Activated CD4-positive, alpha-beta memory T cell treated with anti-CD3 and anti-CD28 coated beads for 36 hours (primary cell): ENCODE measurements at regions of chr6 and their contacts with region 1.

Region 1: GRCh38 chr6:129370268-129370916 is 339.6 kb downstream of the ARHGAP18 start:
- DNase-seq: peak; percentile 56
- H3K4me3 Mint-ChIP-seq: no peak overlapping the region
- H3K27ac Mint-ChIP-seq: no peak overlapping the region
- H3K4me1 Mint-ChIP-seq: peaks cover 19% of the 10 kb centered on the region
- H3K27me3 Mint-ChIP-seq: no peaks in the 10 kb centered on the region

Region 2: GRCh38 chr6:128807577-128807976 is 562.8 kb before region 1 on chr6:
- CTCF ChIA-PET with region 1: interaction called, 8 read pairs
- POLR2A ChIA-PET with region 1: no interaction called
- intact Hi-C with region 1: loop called (anchors 2 kb)
- DNase-seq: no peak
- H3K4me3 Mint-ChIP-seq: no peak overlapping the region
- H3K27ac Mint-ChIP-seq: no peak overlapping the region
- H3K4me1 Mint-ChIP-seq: no peaks in the 10 kb centered on the region
- H3K27me3 Mint-ChIP-seq: no peaks in the 10 kb centered on the region

Region 3: GRCh38 chr6:129239825-129240491 is 130.4 kb before region 1 on chr6:
- CTCF ChIA-PET with region 1: no interaction called
- POLR2A ChIA-PET with region 1: no interaction called
- intact Hi-C with region 1: no loop called
- DNase-seq: no peak
- H3K4me3 Mint-ChIP-seq: no peak overlapping the region
- H3K27ac Mint-ChIP-seq: no peak overlapping the region
- H3K4me1 Mint-ChIP-seq: no peaks in the 10 kb centered on the region
- H3K27me3 Mint-ChIP-seq: peaks cover 6% of the 10 kb centered on the region

Region 4: DNA sequence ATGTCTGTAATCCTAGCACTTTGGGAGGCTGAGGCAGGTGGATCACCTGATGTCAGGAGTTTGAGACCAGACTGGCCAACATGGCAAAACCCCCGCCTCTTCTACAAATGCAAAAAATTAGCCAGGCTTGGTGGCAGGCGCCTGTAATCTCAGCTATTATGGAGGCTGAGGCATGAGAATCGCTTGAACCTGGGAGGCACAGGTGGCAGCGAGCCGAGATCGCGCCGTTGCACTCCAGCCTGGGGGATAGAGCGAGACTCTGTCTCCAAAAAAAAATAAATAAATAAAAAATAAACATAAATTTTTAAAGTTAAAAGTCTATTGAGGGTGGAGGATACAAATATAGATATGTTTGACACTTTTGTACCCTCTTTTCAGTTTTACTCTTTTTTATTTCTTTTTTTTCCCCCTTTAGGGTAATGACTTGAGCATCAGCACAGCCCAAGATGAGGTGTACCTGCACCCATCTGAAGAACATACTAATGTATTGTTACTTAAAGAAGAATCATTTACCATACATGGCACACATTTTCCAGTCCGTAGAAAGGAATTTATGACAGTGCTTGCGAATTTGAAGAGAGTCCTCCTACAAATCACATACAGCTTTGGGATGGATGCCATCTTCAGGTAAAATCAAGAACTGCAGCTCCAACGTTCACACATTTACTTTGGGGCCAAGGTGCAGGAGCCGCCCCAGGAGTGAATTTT is 118.6 kb before region 1 on chr6:
- CTCF ChIA-PET with region 1: interaction called, 8 read pairs
- POLR2A ChIA-PET with region 1: no interaction called
- intact Hi-C with region 1: loop called (anchors 5 kb)
- DNase-seq: peak; percentile 61
- H3K4me3 Mint-ChIP-seq: no peak overlapping the region
- H3K27ac Mint-ChIP-seq: no peak overlapping the region
- H3K4me1 Mint-ChIP-seq: peaks cover 17% of the 10 kb centered on the region
- H3K27me3 Mint-ChIP-seq: peaks cover 17% of the 10 kb centered on the region

Region 5: GRCh38 chr6:129426343-129426742 is 56.0 kb after region 1 on chr6:
- CTCF ChIA-PET with region 1: no interaction called
- POLR2A ChIA-PET with region 1: no interaction called
- intact Hi-C with region 1: no loop called
- DNase-seq: no peak
- H3K4me3 Mint-ChIP-seq: no peak overlapping the region
- H3K27ac Mint-ChIP-seq: no peak overlapping the region
- H3K4me1 Mint-ChIP-seq: no peaks in the 10 kb centered on the region
- H3K27me3 Mint-ChIP-seq: no peaks in the 10 kb centered on the region